ENCODE measurements at regions of chr9 and their contacts with region 1.

Region 1: DNA sequence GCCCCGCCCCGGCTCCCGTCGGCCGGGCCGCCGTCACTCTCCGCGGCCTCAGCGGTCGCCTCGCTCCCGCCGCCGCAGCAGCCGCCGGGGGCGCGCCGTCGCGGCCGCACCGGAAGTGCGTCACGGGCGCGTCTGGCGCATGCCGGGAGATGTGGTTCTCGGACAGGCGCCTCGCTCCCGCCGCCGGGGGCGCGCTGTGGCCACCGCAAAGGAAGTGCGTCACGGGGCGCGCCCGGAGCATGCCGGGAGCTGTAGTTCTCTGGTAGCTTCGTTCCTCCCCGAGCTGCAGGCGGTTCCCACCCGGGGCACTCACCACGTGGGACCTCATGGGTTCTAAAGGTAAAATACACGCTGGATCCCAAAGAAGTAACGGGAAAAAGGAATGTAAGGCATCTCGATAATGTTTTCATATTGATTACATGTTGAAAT is at the start of gene UBAC1:
- DNase-seq: peak; percentile 91
- H3K4me3 ChIP-seq: peak within 1 kb of the TSS; percentile 60 to 92 (median 68)
- H3K27ac ChIP-seq: peak within 1 kb of the TSS; percentile 37
- H3K4me1 ChIP-seq: peaks cover 13% of the 10 kb centered on the region
- H3K27me3 ChIP-seq: no peaks in the 10 kb centered on the region
- CTCF ChIP-seq: peak in 1 of 2 donors; percentile 48
- total RNA-seq, gene UBAC1: 39.2 to 43.4 TPM

Region 2: DNA sequence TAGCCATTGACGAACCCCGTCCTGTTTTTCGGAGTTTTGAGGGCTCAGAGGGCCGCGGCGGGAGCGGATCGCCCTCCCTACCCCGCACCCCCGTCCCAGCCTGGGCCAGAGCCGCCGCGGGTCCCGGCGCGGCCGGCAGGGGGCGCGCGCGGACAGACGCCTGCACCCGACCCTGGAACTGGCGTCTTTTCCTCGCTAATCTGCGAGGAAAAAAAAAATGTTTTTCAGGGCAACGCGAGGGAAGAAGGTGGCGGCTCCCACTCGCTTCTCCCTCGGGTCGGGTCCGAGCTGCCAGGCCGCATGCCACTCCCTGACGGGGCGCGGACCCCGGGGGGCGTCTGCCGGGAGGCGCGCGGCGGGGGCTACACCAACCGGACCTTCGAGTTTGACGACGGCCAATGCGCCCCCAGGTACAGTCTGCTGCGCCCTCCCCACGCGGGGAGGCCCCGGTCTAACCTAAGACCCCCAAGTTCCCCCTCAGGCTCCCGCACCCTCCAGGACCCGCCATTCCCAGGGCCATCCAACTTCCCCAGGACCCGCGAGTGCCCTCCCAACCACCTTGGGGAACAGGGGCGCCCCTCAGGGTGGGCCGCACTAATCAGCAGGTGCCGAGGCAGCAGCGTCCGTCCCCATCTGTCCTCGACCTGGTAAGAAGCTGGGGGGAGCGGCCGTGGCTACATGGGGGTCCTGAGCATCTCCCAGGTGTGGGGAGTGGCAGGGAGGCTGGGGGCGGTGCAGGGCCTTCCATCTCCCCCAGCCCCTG is 259.2 kb before region 1 on chr9 and contains the start of gene KCNT1:
- CTCF ChIA-PET with region 1: no interaction called
- dilution Hi-C with region 1: no loop called
- in situ Hi-C with region 1: no loop called
- intact Hi-C with region 1: loop called (anchors 5 kb)
- DNase-seq: peak; percentile 25
- H3K4me3 ChIP-seq: no peak within 1 kb of the TSS
- H3K27ac ChIP-seq: no peak within 1 kb of the TSS
- H3K4me1 ChIP-seq: no peaks in the 10 kb centered on the region
- H3K27me3 ChIP-seq: no peaks in the 10 kb centered on the region
- CTCF ChIP-seq: peak; percentile 71 to 72
- total RNA-seq, gene KCNT1: not detected

Region 3: GRCh38 chr9:135797507-135798262 is 163.6 kb before region 1 on chr9:
- CTCF ChIA-PET with region 1: no interaction called
- dilution Hi-C with region 1: no loop called
- in situ Hi-C with region 1: no loop called
- intact Hi-C with region 1: loop called (anchors 5 kb)
- DNase-seq: peak; percentile 29
- H3K4me3 ChIP-seq: no peak overlapping the region
- H3K27ac ChIP-seq: no peak overlapping the region
- H3K4me1 ChIP-seq: no peaks in the 10 kb centered on the region
- H3K27me3 ChIP-seq: no peaks in the 10 kb centered on the region
- CTCF ChIP-seq: peak; percentile 54 to 67

Region 4: DNA sequence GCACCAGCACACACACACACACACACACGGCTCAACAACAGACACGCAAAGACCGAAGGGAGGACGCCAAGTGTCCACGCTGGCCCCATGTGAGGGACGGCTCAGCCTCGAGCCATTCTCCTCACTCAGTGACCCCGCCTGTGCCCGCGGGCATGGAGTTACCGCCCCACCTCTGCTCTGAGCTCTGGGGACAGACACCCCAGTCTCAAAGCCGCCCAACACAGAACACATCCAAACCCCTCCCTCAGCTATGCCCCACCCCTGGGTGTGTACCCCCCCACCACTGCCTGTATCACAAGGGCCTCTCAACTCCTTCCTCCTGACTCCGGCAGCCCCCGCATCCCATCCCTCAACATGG is 135.1 kb before region 1 on chr9:
- CTCF ChIA-PET with region 1: no interaction called
- dilution Hi-C with region 1: no loop called
- in situ Hi-C with region 1: no loop called
- intact Hi-C with region 1: no loop called
- DNase-seq: no peak
- H3K4me3 ChIP-seq: no peak overlapping the region
- H3K27ac ChIP-seq: no peak overlapping the region
- H3K4me1 ChIP-seq: no peaks in the 10 kb centered on the region
- H3K27me3 ChIP-seq: no peaks in the 10 kb centered on the region
- CTCF ChIP-seq: no peak

Region 5: DNA sequence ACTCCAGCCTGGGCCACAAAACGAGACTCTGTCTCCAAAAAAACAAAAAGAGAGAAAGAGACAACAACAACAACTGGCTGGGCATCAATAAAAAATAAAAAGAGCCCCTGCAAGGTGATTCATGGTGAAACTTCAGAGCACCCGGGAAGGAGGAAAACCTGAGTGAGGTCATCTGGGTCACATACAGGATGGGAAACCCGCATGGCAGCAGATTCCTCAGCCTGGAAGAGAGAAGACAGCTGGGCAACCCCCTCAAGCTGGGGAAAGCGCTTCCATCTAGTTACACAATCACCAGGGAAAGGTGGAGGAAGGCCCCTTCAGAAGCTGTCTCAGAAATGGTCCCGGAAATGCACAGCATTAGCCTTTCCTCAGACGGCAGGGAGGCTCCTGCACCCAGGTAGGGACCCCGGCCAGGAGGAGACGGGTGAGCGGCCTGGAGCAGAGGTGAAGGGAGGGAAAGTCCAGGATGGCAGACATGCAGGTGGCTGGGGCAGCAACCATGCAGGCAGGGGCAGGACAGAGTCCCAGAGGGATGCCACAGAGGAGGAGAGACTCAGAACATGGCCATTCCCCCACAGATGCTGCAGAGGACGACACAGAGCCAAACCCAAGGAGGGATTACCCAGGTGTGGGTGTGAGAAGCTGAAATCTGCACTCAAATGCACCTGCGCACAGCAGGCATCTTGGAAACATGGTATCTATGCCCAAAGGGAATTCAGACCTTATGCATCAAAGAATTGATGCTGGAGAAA is 83.3 kb before region 1 on chr9:
- CTCF ChIA-PET with region 1: no interaction called
- dilution Hi-C with region 1: no loop called
- in situ Hi-C with region 1: no loop called
- intact Hi-C with region 1: no loop called
- DNase-seq: no peak
- H3K4me3 ChIP-seq: no peak overlapping the region
- H3K27ac ChIP-seq: no peak overlapping the region
- H3K4me1 ChIP-seq: no peaks in the 10 kb centered on the region
- H3K27me3 ChIP-seq: no peaks in the 10 kb centered on the region
- CTCF ChIP-seq: no peak

Region 6: GRCh38 chr9:135907431-135908092 is 53.7 kb before region 1 on chr9 and contains the start of gene CAMSAP1:
- CTCF ChIA-PET with region 1: no interaction called
- dilution Hi-C with region 1: loop called (anchors 5 kb)
- in situ Hi-C with region 1: no loop called
- intact Hi-C with region 1: no loop called
- DNase-seq: peak; percentile 90
- H3K4me3 ChIP-seq: peak within 1 kb of the TSS; percentile 66 to 78 (median 69)
- H3K27ac ChIP-seq: peak within 1 kb of the TSS; percentile 94
- H3K4me1 ChIP-seq: peaks cover 52% of the 10 kb centered on the region
- H3K27me3 ChIP-seq: no peaks in the 10 kb centered on the region
- CTCF ChIP-seq: no peak
- total RNA-seq, gene CAMSAP1: 23.5 to 25.5 TPM

Region 7: DNA sequence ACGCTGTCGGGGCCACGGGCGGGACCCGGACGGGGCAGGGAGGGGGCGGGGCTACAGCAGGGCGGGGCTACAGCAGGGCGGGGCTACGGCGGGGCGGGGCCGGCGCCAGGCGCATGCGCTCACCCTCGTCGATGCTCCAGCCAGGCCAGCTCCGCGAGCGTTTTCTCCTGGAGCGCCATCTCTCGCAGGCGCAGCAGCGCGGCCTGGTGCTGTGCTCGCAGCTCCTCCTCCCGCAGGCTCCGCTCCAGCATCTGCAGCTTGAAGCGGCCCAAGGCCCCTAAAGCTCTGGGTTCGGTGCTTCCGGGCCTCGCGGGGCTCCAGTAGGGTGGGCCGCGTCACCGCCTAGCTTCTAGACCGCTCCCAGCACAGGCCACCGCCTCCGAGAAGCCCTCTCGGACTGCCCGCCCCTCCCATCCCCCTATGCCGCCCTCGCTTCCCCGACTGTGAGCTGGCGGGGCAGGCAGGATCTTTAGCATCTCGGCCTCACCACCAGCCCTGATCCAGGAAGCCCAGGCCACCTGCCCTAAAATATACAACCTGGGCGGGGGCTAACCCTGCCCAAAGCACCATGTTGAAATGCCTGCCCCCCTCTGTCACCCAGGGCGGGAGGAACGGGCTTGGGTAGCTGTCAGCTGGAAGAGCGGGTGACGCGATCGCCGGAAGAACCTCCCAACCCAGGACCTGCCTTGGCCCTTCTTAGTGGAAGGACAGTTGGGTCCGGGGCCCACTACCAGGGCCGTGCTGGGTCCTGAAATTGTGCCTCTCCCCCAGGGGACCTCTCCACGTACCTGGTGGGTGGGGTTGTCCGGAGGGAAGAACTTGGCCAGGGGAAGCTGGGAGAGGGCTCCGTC is 306.2 kb after region 1 on chr9:
- CTCF ChIA-PET with region 1: no interaction called
- dilution Hi-C with region 1: no loop called
- in situ Hi-C with region 1: loop called in 1 of 2 experiments (anchors 25 kb)
- intact Hi-C with region 1: no loop called
- DNase-seq: peak; percentile 66
- H3K4me3 ChIP-seq: peak overlapping the region; percentile 41 to 59 (median 55)
- H3K27ac ChIP-seq: no peak overlapping the region
- H3K4me1 ChIP-seq: peaks cover 5% of the 10 kb centered on the region
- H3K27me3 ChIP-seq: peaks cover 3% of the 10 kb centered on the region
- CTCF ChIP-seq: peak in 1 of 2 donors; percentile 40